Activated CD4-positive, alpha-beta T cell treated with anti-CD3 and anti-CD28 coated beads for 36 hours (primary cell): ENCODE measurements at regions of chr13 and their contacts with region 1.

Region 1: DNA sequence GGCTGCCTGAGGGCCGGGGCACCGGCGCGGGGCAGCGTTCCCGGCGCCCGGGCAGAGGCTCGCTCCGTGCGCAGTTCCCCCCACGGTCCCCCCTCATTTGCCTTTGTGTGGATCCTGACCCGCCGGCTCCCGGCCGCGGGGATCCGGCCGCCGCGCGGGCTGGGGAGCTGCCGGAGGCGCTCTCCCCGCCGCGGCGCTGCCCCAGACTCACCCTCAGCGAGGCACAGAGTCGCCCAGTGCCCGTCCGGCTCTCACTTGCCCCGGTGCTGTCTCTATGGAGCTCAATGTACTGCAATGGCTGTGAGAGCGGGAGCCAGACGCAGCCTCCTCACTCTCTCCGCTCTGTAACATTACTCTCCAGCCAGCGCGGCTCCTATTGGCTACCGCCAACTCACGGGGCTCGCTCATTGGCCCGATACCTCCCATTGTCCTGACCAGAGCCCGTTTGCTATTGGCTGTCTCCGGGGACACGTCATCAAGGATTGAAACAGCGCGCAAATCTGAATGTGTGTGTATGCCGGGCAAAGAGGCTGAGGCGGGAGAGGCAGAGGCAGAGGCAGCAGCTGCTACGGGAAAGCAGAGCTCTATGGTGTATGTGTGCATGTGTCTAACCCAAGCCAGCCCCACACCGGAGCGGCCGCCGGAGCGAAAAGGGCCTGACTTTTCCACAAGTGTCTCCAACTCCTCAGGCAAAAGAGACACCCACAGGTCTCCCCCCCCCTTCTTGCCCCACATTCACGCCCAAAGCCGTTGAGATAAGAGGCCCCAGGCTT is at the start of gene HMGB1:
- DNase-seq: peak; percentile 98
- ATAC-seq: peak; percentile 93
- H3K4me3 Mint-ChIP-seq: peak within 1 kb of the TSS; percentile 86
- H3K27ac Mint-ChIP-seq: peak within 1 kb of the TSS; percentile 98
- H3K4me1 Mint-ChIP-seq: peaks cover 19% of the 10 kb centered on the region
- H3K27me3 Mint-ChIP-seq: no peaks in the 10 kb centered on the region
- total RNA-seq, gene HMGB1: 764 to 851 TPM

Region 2: DNA sequence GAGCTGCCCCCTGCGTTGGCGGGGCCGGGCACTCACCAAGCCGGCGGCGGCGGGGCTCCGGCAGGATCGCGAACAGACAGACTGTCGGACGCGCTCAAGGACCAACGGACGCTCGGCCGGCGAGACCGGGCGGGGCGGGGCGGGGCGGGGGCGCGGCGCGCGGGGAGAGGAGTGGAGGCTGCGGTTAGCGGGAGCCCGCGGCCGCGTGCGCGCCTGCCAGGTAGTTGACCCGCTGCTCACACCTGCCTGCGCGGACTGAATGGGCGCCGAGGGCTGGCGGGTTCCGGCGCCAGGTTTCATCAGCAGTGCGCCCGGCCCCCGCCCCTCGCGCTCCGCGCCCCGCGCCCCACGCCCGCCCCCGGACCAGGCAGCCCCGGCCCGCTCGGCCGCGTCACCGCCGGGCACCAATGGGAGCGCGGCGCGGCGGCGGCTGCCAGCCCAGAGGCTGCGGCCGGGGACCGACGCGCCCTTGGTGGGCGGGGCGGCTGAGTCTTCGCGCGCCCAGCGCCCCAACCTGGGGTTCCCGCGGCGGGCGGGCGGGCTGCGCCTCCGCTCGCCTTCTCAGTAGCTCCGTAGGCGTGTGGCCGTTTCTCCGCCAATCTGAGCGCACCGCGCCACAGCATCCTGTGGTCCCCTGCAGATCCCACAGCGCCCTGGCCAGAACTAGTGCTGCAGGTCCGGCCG is 870.2 kb before region 1 on chr13 and contains the start of gene SLC7A1:
- CTCF ChIA-PET with region 1: no interaction called
- POLR2A ChIA-PET with region 1: no interaction called
- intact Hi-C with region 1: loop called (anchors 2 to 10 kb)
- DNase-seq: peak; percentile 92
- ATAC-seq: peak; percentile 88
- H3K4me3 Mint-ChIP-seq: peak within 1 kb of the TSS; percentile 90
- H3K27ac Mint-ChIP-seq: peak within 1 kb of the TSS; percentile 95
- H3K4me1 Mint-ChIP-seq: peaks cover 36% of the 10 kb centered on the region
- H3K27me3 Mint-ChIP-seq: no peaks in the 10 kb centered on the region
- total RNA-seq, gene SLC7A1: 91.1 to 126 TPM

Region 3: GRCh38 chr13:30306762-30307193 is 159.0 kb before region 1 on chr13:
- CTCF ChIA-PET with region 1: no interaction called
- POLR2A ChIA-PET with region 1: no interaction called
- intact Hi-C with region 1: loop called in 1 of 2 experiments (anchors 1 kb)
- DNase-seq: peak; percentile 95
- ATAC-seq: peak; percentile 91
- H3K4me3 Mint-ChIP-seq: peak overlapping the region; percentile 80
- H3K27ac Mint-ChIP-seq: peak overlapping the region; percentile 79
- H3K4me1 Mint-ChIP-seq: peaks cover 31% of the 10 kb centered on the region
- H3K27me3 Mint-ChIP-seq: no peaks in the 10 kb centered on the region

Region 4: DNA sequence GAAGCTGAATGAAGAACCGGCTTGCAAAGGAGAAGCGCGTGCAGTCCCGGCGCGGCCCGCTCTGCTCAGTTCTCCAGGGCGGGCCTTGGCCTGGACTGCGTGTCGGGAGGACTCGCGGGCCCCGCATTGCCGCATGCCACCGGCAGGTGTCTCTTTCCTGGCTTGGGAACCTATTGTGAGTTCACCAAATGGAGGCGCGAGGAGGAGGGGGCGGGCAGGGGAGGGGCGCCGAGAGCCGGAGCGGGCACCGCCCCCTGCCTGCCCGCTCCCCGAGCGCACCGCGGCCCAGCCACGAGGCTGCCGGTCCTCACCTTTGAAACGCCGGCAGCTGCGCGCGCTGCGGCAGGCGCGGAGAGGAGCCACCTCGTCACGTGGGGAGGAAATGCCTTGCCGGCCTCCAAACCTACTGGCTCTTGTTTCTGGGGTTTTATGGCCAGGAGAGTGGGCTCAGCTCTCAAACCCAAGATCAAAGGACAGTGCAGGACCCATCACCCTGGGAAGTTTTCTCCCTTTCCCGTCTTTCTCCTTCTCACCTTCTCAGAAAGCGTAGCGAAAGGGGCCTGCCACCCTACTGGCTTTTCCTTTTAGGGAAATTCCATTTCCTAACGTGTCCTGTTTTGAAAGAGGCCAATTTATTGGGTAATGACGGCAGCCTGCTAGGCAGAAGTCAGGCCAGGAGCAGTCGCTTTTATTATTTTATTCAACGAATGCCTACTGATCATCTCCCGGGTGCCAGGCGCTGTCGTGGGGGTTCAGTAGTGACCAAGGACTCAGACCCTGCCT is 57.3 kb before region 1 on chr13:
- CTCF ChIA-PET with region 1: interaction called, 5 read pairs
- POLR2A ChIA-PET with region 1: no interaction called
- intact Hi-C with region 1: loop called in 1 of 2 experiments (anchors 1 kb)
- DNase-seq: peak; percentile 96
- ATAC-seq: peak; percentile 93
- H3K4me3 Mint-ChIP-seq: peak overlapping the region; percentile 39
- H3K27ac Mint-ChIP-seq: peak overlapping the region; percentile 37
- H3K4me1 Mint-ChIP-seq: peaks cover 20% of the 10 kb centered on the region
- H3K27me3 Mint-ChIP-seq: no peaks in the 10 kb centered on the region

Region 5: DNA sequence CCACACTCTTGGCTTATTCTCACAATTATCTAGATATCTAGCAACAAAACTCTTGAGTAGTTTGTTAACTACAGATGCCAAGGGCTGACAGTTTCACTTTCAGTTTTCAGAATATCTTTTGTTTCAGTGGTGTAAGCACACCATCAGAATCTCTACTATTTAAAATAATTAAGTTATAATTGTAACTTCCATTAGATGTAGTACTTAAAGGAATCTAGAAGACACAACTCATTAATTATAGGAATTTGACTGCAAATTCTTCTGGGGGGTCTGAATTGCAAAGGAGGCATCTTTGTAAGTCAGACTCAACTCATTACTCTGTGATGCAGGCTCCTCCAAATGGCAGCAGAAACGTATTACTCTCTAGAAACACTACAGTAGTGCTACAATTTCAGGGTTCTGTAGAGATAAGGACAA is 107.1 kb after region 1 on chr13:
- CTCF ChIA-PET with region 1: no interaction called
- POLR2A ChIA-PET with region 1: interaction called, 4 read pairs
- intact Hi-C with region 1: loop called (anchors 2 to 5 kb)
- DNase-seq: peak; percentile 27
- ATAC-seq: peak; percentile 54
- H3K4me3 Mint-ChIP-seq: peak overlapping the region; percentile 55
- H3K27ac Mint-ChIP-seq: peak overlapping the region; percentile 72
- H3K4me1 Mint-ChIP-seq: peaks cover 40% of the 10 kb centered on the region
- H3K27me3 Mint-ChIP-seq: no peaks in the 10 kb centered on the region

Region 6: DNA sequence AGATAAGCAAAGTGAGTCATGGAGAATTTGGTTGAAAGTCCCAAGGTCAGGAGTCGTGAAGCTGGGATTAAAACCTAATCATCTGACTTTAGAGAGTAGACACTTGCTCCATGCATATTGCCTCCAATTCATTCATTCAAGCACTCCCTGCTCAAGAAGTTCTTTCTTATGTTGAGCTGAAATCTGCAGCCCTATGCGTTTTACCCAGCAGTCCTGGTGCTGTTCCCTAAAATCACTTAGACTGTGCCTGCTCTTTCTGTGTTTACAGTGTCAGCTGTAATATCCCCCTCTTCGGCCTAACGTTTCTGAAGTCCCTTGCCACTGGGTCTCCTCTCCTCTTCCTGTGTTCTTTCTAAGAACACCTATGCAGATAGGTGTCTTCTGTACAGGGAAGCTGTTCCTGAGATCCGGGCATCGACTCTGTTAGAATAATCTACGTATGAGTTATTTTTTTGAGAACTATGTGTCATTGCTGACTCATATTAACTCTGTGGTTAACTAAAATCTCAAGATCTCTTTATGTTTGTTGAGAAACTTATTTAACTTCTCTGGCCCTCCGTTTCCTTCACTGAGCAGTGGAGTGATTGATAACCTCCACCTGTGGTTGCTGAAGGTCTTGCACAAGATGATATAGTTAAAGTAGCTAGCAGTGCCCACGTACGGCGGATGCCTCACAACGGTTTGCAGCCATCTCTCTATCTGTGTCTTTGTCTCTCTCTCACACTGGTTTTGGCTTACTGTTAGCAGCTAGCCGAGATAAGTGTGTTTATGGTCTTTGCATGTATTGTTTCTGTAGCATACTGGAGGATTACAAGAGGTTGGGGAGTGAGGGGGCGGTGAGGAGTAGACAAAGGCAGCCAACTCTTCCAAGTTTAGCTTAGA is 274.2 kb after region 1 on chr13:
- CTCF ChIA-PET with region 1: no interaction called
- POLR2A ChIA-PET with region 1: interaction called, 4 read pairs
- intact Hi-C with region 1: loop called in 1 of 2 experiments (anchors 1 kb)
- DNase-seq: peak; percentile 83
- ATAC-seq: peak; percentile 76
- H3K4me3 Mint-ChIP-seq: peak overlapping the region; percentile 68
- H3K27ac Mint-ChIP-seq: peak overlapping the region; percentile 87
- H3K4me1 Mint-ChIP-seq: peaks cover 81% of the 10 kb centered on the region
- H3K27me3 Mint-ChIP-seq: peaks cover 2% of the 10 kb centered on the region

Region 7: DNA sequence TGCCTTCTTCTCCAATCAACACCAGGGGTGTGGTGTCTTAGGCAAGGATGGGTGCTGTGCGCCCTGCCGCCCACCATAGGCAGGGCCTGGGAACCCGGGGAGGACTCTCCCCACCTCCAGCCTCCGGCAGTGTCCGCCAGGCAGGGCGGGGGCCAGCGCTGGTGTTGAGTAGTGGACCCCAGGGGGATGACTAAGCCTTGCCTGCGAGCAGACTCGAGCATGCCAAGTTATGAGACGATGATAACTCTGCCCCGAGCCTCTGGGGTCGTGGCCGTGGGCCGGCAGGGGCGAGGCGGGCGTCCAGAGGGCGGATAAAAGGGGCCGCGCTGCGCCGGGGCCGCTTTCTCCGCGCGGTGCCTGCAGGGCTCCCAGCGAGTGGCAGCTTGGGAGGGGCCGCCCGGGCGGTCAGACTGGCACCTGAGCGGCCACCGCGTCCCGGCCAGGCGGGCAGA is 440.2 kb after region 1 on chr13 and contains the start of gene MEDAG:
- CTCF ChIA-PET with region 1: no interaction called
- POLR2A ChIA-PET with region 1: no interaction called
- intact Hi-C with region 1: no loop called
- DNase-seq: no peak
- ATAC-seq: no peak
- H3K4me3 Mint-ChIP-seq: no peak within 1 kb of the TSS
- H3K27ac Mint-ChIP-seq: no peak within 1 kb of the TSS
- H3K4me1 Mint-ChIP-seq: peaks cover 7% of the 10 kb centered on the region
- H3K27me3 Mint-ChIP-seq: peaks cover 56% of the 10 kb centered on the region
- total RNA-seq, gene MEDAG: not detected

Region 8: DNA sequence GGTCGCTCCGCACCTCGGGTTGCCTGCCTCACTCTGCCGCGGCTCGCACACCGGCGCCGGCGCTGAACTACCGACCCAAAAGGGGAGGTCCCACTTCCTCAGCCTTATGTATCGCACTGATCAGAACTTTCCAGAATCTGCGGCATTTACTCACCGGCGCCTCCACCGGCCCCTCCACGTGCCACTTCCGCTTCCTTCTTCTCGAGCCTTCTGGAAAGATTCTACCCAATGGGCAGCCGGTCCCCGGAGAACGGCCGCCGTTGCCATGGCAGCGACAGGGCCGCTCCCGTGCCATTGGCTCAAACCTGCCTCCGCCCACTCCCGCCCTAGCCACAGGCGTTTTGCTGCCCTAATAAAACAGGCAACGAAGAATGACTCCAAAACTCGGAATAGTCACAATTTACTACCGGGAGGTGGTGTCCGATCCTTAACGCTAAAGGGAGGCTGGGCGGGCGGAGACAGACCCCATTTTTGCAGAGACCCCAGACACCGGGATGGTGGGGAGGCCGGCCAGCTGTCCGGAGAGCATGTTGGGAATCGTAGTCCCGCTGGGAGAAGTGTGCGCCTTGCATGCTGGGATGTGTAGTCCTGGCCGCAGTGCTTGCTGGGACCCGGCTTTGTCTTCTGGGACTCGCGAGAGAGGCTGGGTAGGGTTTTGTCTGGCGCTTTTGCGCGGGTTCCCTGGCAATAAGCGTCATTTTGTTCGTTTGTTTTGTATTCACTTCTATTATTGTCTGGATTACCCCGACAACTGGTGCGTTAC is 696.2 kb after region 1 on chr13 and contains the start of gene HSPH1:
- CTCF ChIA-PET with region 1: no interaction called
- POLR2A ChIA-PET with region 1: no interaction called
- intact Hi-C with region 1: loop called (anchors 1 to 2 kb)
- DNase-seq: peak; percentile 99
- ATAC-seq: peak; percentile 91
- H3K4me3 Mint-ChIP-seq: peak within 1 kb of the TSS; percentile 88
- H3K27ac Mint-ChIP-seq: peak within 1 kb of the TSS; percentile 100
- H3K4me1 Mint-ChIP-seq: peaks cover 31% of the 10 kb centered on the region
- H3K27me3 Mint-ChIP-seq: no peaks in the 10 kb centered on the region
- total RNA-seq, gene HSPH1: 229 to 259 TPM

Region 9: DNA sequence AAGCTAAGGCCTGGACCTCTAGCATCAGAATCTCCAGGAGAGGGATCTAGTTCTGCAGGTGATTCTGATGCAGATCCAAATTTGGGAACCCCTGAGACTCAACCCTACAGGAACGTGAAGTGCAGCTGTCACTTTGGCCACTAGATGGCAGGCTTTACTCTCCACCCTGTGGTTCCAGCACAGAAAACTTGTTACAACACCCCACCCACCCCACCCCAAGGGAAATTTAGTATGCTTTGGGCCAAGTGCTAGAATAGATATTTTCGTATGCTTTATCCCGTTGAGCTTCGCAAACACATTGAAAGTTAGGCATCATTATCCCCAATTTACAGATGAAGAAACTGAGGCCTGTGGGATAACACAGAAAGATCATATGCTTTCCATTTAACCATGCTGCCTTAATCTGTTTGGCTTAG is 966.0 kb after region 1 on chr13:
- CTCF ChIA-PET with region 1: no interaction called
- POLR2A ChIA-PET with region 1: no interaction called
- intact Hi-C with region 1: no loop called
- DNase-seq: peak; percentile 70
- ATAC-seq: no peak
- H3K4me3 Mint-ChIP-seq: no peak overlapping the region
- H3K27ac Mint-ChIP-seq: no peak overlapping the region
- H3K4me1 Mint-ChIP-seq: no peaks in the 10 kb centered on the region
- H3K27me3 Mint-ChIP-seq: peaks cover 5% of the 10 kb centered on the region